Naive thymus-derived CD8-positive, alpha-beta T cell (primary cell): ENCODE measurements at regions of chr3 and their contacts with region 1.

Region 1: GRCh38 chr3:72821161-72821781 is 27.0 kb downstream of the SHQ1 start:
- DNase-seq: peak in 5 of 10 donors; percentile 2 to 35 (median 13)
- ATAC-seq: peak; percentile 71 to 82
- H3K4me3 Mint-ChIP-seq: no peak overlapping the region
- H3K27ac Mint-ChIP-seq: no peak overlapping the region
- H3K4me1 Mint-ChIP-seq: peaks cover 0 to 11% (median 6%) of the 10 kb centered on the region in 4 donors
- H3K27me3 Mint-ChIP-seq: no peaks in the 10 kb centered on the region

Region 2: DNA sequence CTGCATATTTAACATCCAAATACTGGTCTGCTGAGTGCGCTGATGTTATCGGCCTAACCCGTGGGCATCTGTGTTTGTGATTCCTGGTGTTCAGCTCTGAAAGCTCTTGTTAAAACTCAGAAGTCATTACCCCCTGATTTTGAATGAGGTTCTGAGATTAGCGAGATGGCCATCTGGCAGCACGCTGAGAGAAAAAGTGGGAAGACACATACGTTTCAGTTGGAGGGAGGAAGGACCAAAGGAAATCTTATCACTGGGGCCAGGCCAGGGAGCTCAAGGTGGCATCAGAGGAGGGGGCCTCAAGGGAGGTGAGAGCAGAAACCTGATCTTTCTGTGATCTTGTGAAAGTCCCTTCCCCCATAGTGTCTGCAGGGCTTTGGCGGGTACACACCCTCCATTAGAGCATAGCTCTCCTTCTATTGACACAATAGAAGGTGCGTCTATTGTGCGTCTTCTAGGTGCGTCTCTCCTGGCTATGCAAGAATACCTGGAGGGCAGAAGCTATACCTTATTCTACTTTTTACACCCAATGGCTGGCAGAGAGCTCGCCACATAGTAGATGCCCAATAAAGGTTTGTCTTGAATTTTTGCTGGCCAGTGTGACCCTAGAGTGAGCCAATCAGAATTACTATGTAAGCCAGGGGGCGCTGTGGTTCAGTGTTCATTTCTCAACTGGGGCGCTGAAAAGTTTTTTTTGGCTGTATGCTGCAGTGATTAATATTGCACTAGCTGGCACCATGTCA is 155.4 kb before region 1 on chr3:
- POLR2A ChIA-PET with region 1: interaction called, 40 read pairs
- DNase-seq: peak; percentile 19 to 81 (median 60)
- ATAC-seq: peak; percentile 49 to 70
- H3K4me3 Mint-ChIP-seq: no peak overlapping the region
- H3K27ac Mint-ChIP-seq: no peak overlapping the region
- H3K4me1 Mint-ChIP-seq: no peaks in the 10 kb centered on the region
- H3K27me3 Mint-ChIP-seq: peaks cover 0 to 6% (median 0%) of the 10 kb centered on the region in 5 donors